Panc1 (cell line): ENCODE measurements at regions of chr1 and their contacts with region 1.

Region 1: DNA sequence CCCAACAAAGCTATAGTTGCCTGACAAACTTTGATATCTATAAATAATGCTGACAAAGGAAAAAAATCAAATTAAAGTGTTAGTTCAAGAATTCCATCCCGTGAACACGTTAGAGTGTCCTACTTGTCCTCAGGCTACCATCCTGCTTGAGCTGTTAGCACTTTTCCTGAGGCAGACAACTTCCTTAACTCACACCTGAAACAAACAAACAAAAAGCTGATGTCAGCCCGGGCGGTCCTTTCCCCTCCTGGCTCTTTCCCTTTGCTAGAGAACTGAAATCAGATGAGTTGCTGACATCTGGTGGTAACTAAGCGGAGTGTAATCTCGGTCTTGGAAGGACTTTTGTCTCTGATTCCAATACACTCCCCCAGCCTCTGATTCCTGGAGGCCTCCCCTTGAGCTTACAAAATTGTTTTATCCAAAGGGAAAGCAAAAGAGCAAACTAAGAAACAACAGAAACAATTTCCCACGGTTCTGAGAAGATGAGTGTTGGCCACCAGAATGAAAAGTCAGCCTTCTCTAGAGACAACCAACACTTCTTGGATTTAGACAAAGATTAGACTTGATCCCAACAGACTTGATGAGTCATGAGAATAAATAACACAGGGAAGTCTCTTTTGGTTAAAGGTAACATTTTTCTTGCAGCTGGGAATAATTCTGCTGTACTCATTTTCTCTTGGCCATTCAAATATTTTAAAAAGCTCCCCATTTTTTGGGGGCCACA is 135.4 kb downstream of the PROX1 start:
- DNase-seq: peak; percentile 35
- ATAC-seq: peak; percentile 94
- H3K4me3 ChIP-seq: no peak overlapping the region
- H3K27ac ChIP-seq: no peak overlapping the region
- H3K4me1 ChIP-seq: no peaks in the 10 kb centered on the region
- H3K27me3 ChIP-seq: peaks cover 5% of the 10 kb centered on the region
- CTCF ChIP-seq: peak; percentile 75

Region 2: GRCh38 chr1:213247038-213247437 is 876.2 kb before region 1 on chr1:
- CTCF ChIA-PET with region 1: no interaction called
- POLR2A ChIA-PET with region 1: no interaction called
- in situ Hi-C with region 1: no loop called
- intact Hi-C with region 1: loop called (anchors 2 kb)
- DNase-seq: no peak
- ATAC-seq: no peak
- H3K4me3 ChIP-seq: no peak overlapping the region
- H3K27ac ChIP-seq: no peak overlapping the region
- H3K4me1 ChIP-seq: no peaks in the 10 kb centered on the region
- H3K27me3 ChIP-seq: no peaks in the 10 kb centered on the region
- CTCF ChIP-seq: no peak

Region 3: DNA sequence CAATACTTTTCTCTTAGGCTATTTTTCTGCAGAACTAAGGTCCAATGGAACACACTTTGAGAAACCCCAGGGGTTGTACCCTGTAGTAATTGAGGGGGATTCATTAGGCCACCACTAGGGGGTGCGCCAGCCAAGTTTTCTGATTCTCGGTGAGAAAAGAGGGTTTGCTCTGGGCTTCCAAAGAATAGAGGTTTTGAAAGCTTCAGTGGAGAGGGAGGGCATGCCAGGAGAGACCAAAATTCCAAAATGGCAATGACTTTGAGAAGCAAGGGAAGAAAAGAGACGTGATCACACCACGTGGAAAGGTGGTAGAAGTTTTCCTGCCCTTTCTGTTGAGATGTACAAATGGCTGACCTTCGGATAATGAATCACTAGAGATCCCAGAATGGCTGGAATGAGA is 748.9 kb before region 1 on chr1:
- CTCF ChIA-PET with region 1: no interaction called
- POLR2A ChIA-PET with region 1: no interaction called
- in situ Hi-C with region 1: no loop called
- intact Hi-C with region 1: loop called (anchors 2 kb)
- DNase-seq: peak; percentile 20
- ATAC-seq: peak; percentile 82; the same call in 1 of the 2 replicates
- H3K4me3 ChIP-seq: no peak overlapping the region
- H3K27ac ChIP-seq: no peak overlapping the region
- H3K4me1 ChIP-seq: no peaks in the 10 kb centered on the region
- H3K27me3 ChIP-seq: no peaks in the 10 kb centered on the region
- CTCF ChIP-seq: peak; percentile 93

Region 4: GRCh38 chr1:214058076-214058475 is 65.1 kb before region 1 on chr1:
- CTCF ChIA-PET with region 1: no interaction called
- POLR2A ChIA-PET with region 1: no interaction called
- in situ Hi-C with region 1: no loop called
- intact Hi-C with region 1: no loop called
- DNase-seq: no peak
- ATAC-seq: no peak
- H3K4me3 ChIP-seq: no peak overlapping the region
- H3K27ac ChIP-seq: no peak overlapping the region
- H3K4me1 ChIP-seq: no peaks in the 10 kb centered on the region
- H3K27me3 ChIP-seq: peaks cover 4% of the 10 kb centered on the region
- CTCF ChIP-seq: no peak

Region 5: DNA sequence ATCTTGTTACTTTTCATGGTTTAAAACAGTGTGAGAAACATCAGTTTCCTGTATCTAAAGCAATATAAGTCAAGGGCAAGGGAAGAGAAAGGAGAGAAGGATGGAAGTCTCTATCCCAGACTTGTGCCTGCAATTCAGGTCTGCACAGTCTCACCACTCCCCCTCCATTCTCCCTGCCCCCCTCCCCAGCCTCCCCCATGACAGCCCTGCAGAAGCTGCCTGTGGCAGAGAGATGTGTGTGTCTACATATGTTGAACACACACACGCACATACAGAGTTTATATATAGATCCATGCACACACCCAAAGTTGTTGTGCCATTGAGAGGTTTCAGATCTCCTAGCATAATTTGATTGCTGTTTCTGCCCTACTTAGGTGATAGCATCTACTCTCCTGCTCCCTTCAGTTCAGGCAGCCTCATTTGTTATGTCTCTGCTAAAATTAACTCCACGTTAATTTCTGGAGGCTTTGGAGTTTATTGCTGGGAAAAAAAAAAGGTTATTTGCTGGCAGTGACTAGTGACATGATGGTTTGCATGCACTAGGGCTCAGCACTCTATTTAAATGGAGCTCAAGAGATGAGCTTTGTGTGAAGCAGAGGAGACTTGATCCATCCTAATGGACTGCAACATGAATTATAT is 32.9 kb after region 1 on chr1:
- CTCF ChIA-PET with region 1: no interaction called
- POLR2A ChIA-PET with region 1: no interaction called
- in situ Hi-C with region 1: no loop called
- intact Hi-C with region 1: no loop called
- DNase-seq: no peak
- ATAC-seq: no peak
- H3K4me3 ChIP-seq: no peak overlapping the region
- H3K27ac ChIP-seq: no peak overlapping the region
- H3K4me1 ChIP-seq: no peaks in the 10 kb centered on the region
- H3K27me3 ChIP-seq: peaks cover 32% of the 10 kb centered on the region
- CTCF ChIP-seq: no peak

Region 6: GRCh38 chr1:215569986-215570824 is 1447.0 kb after region 1 on chr1:
- CTCF ChIA-PET with region 1: no interaction called
- POLR2A ChIA-PET with region 1: interaction called, 11 read pairs
- in situ Hi-C with region 1: no loop called
- intact Hi-C with region 1: no loop called
- DNase-seq: no peak
- ATAC-seq: no peak
- H3K4me3 ChIP-seq: peak overlapping the region; percentile 79 to 82; a peak in 2 of 4 replicates
- H3K27ac ChIP-seq: peak overlapping the region; percentile 77
- H3K4me1 ChIP-seq: peaks cover 26% of the 10 kb centered on the region
- H3K27me3 ChIP-seq: no peaks in the 10 kb centered on the region
- CTCF ChIP-seq: no peak